ENCODE measurements at regions of chr15 and their contacts with region 1.

Region 1: GRCh38 chr15:57732526-57733331 is 26.2 kb downstream of the POLR2M start:
- DNase-seq: peak; percentile 56
- ATAC-seq: no peak
- H3K4me3 Mint-ChIP-seq: no peak overlapping the region
- H3K27ac Mint-ChIP-seq: no peak overlapping the region
- H3K4me1 Mint-ChIP-seq: peaks cover 4% of the 10 kb centered on the region
- H3K27me3 Mint-ChIP-seq: no peaks in the 10 kb centered on the region

Region 2: GRCh38 chr15:57706405-57707209 is 26.1 kb before region 1 on chr15 and contains the start of gene POLR2M:
- CTCF ChIA-PET with region 1: interaction called, 25 read pairs
- DNase-seq: peak; percentile 95
- ATAC-seq: peak; percentile 93
- H3K4me3 Mint-ChIP-seq: peak within 1 kb of the TSS; percentile 77
- H3K27ac Mint-ChIP-seq: peak within 1 kb of the TSS; percentile 86
- H3K4me1 Mint-ChIP-seq: peaks cover 59% of the 10 kb centered on the region
- H3K27me3 Mint-ChIP-seq: peaks cover 6% of the 10 kb centered on the region
- total RNA-seq, gene POLR2M: 66.5 to 70.4 TPM

Region 3: DNA sequence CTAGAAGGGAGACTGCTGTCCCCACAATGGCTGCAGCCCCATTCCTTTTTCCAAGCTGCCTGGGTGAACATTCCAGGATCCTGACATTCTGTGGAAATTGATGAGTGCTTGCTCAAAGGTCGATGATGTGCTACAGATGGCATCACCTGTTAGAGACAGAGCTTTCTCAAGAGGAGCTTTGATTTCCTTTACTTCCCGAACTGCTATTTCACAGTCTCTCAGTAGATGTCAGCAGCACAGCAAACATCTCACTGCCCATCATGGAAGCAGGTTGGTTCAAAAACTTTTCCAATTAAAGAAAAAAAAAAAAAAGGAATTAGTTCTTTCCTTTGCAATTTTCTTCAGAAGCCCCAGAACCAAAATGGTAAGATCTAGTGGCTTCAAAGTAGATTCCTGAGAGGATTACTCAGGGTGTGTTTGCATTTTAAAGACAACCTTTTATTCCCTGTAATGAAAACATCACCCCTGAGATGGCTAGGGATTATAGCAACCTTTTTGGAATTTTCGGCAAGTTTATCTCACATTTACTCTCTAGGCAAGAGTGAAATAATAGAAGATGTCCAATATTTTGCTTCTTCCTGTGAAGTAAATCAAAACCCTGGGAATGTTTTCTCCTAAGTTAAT is 18.6 kb after region 1 on chr15:
- CTCF ChIA-PET with region 1: interaction called, 16 read pairs
- DNase-seq: no peak
- ATAC-seq: no peak
- H3K4me3 Mint-ChIP-seq: no peak overlapping the region
- H3K27ac Mint-ChIP-seq: no peak overlapping the region
- H3K4me1 Mint-ChIP-seq: no peaks in the 10 kb centered on the region
- H3K27me3 Mint-ChIP-seq: peaks cover 2% of the 10 kb centered on the region

Measured in activated CD8-positive, alpha-beta memory T cell treated with anti-CD3 and anti-CD28 coated beads, Interleukin-2, amount 10 ng/mL, durations not matched to agents 7 days and 5 days (primary cell).